H1 (cell line): ENCODE measurements at regions of chr5 and their contacts with region 1.

Region 1: DNA sequence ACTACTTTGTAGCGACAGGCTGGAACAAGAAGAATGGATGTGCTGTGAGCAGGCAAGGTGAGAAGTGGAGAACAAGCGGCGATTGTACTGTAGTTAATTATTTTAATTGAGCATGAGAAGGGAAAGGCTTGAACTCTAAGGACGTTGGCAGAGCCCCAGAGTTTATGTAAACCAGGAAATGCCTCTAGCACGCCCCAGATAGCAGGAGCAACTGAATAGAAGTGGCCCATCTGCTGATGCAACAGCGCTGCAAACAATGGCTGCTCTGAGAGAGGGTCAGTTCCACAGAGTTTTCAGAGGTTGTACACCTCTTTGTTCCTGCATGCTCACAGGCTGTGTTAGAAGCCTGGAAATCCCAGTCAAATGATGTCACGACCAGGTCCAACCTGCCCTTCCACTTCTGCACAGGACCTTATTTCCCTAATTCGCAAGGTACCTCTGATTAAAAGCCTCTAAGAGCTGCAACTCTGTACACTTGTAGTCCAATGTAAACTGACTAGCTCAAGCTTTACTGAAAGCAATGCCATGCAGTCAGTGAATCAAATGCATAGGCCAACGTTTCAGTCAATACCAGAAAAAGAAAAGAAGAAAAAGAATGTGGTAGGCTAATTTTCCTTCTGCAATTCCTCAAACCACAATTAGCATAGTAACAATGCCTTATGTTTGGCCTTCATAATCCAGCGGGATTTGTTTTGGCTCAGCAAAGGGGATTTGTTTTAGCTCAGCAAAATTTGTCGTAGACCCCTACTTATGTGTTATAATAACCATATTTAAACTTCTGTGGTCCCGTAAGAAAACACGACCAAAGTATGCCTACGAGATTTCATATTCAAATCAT is 119.6 kb upstream of the RETREG1 start:
- DNase-seq: no peak
- H3K4me3 ChIP-seq: peak overlapping the region; percentile 27 to 89 (median 66)
- H3K27ac ChIP-seq: peak overlapping the region; percentile 90
- H3K4me1 ChIP-seq: peaks cover 12 to 35% (median 21%) of the 10 kb centered on the region in 4 experiments; a peak in 6 of 7 replicates
- H3K27me3 ChIP-seq: no peaks in the 10 kb centered on the region
- CTCF ChIP-seq: no peak
- EP300 ChIP-seq: no peak
- POLR2A ChIP-seq: peak; percentile 72 to 88
- RAD21 ChIP-seq: no peak

Region 2: DNA sequence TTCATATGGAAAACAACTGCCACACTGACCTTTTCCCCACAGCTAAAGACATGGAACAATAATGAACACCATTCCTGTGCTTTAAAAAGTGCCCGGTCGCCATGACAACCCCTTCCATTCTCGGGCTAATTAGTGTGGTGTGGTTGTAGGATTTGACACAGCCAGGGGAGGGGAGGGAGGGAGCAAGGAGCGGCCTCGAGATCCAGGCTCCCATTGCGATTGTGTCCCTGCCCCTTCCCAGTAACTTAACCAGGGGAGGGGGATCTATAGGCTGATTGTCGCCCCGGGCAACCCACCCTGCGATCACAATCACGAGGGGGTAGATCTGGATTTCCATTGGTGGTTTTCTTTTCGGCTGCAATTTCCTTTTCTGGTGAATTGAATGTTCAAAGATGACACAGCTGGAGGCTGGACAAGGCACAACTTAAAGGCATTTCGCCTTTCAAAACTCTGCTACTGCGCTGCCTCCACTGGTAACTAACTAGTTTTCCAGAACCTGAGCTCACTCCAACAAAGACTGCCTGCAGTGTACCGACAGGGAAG is 22.9 kb before region 1 on chr5:
- CTCF ChIA-PET with region 1: interaction called, 4 read pairs
- POLR2A ChIA-PET with region 1: interaction called, 11 read pairs
- DNase-seq: peak in 1 of 2 experiments; percentile 61
- H3K4me3 ChIP-seq: peak overlapping the region; percentile 2 to 50 (median 23); a peak in 5 of 8 replicates
- H3K27ac ChIP-seq: peak overlapping the region; percentile 71; the same call in 1 of the 2 replicates
- H3K4me1 ChIP-seq: peaks cover 2 to 24% (median 10%) of the 10 kb centered on the region in 4 experiments; a peak in 6 of 7 replicates
- H3K27me3 ChIP-seq: no peaks in the 10 kb centered on the region
- CTCF ChIP-seq: no peak
- EP300 ChIP-seq: no peak
- POLR2A ChIP-seq: no peak
- RAD21 ChIP-seq: no peak

Region 3: GRCh38 chr5:16759147-16759773 is 22.9 kb after region 1 on chr5:
- CTCF ChIA-PET with region 1: interaction called, 7 read pairs
- POLR2A ChIA-PET with region 1: interaction called, 33 read pairs
- DNase-seq: no peak
- H3K4me3 ChIP-seq: no peak overlapping the region
- H3K27ac ChIP-seq: no peak overlapping the region; the same call in 1 of the 2 replicates
- H3K4me1 ChIP-seq: peaks cover 0 to 2% (median 1%) of the 10 kb centered on the region in 4 experiments; a peak in 2 of 7 replicates
- H3K27me3 ChIP-seq: no peaks in the 10 kb centered on the region
- CTCF ChIP-seq: no peak
- EP300 ChIP-seq: no peak
- POLR2A ChIP-seq: no peak
- RAD21 ChIP-seq: no peak

Region 4: DNA sequence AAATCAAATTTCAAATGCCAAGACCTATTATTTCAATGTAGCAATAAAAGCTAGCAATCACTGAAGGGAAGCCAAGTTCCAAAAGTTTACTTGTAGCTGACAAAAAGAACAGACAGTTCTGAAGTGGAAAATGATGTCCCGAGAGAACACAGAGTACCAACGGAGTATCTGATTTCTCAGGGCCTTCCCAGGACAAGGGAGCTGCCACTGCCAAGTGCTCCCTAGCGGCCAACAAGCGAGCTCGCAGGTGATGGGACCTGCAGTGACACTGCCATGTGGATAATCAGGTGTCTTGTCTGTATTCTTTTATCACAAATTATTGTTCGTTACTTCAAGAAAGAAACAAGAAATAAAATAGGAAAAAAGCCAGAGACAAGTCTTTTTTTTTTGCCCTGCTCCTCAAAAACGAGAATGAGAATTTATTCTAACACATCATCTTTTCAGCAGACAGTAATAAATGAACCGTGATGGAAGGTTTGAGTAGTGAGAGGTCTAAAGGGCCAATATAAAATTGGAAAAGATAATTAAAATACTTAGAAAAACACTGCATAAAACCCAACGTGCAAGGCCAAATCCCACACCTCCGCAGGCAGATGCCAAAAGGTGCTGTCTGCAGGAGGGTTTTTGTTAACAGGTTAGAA is 40.4 kb after region 1 on chr5:
- CTCF ChIA-PET with region 1: interaction called, 11 read pairs
- POLR2A ChIA-PET with region 1: interaction called, 3 read pairs
- DNase-seq: no peak
- H3K4me3 ChIP-seq: no peak overlapping the region
- H3K27ac ChIP-seq: no peak overlapping the region
- H3K4me1 ChIP-seq: peaks cover 0 to 9% (median 3%) of the 10 kb centered on the region in 4 experiments; a peak in 2 of 7 replicates
- H3K27me3 ChIP-seq: no peaks in the 10 kb centered on the region
- CTCF ChIP-seq: peak; percentile 69 to 87 (median 83)
- EP300 ChIP-seq: no peak
- POLR2A ChIP-seq: no peak
- RAD21 ChIP-seq: peak; percentile 69 to 82

Region 5: GRCh38 chr5:16842896-16843295 is 106.5 kb after region 1 on chr5:
- CTCF ChIA-PET with region 1: no interaction called
- POLR2A ChIA-PET with region 1: no interaction called
- DNase-seq: no peak
- H3K4me3 ChIP-seq: no peak overlapping the region
- H3K27ac ChIP-seq: no peak overlapping the region
- H3K4me1 ChIP-seq: no peaks in the 10 kb centered on the region
- H3K27me3 ChIP-seq: no peaks in the 10 kb centered on the region
- CTCF ChIP-seq: no peak
- EP300 ChIP-seq: no peak
- POLR2A ChIP-seq: no peak
- RAD21 ChIP-seq: no peak